Body of pancreas (tissue), 4 donors: ENCODE measurements at regions of chr11 and their contacts with region 1.

Region 1: GRCh38 chr11:126039485-126040271 is 23.0 kb downstream of the CDON start:
- DNase-seq: no peak
- ATAC-seq: no peak
- H3K4me3 ChIP-seq: no peak overlapping the region
- H3K27ac ChIP-seq: no peak overlapping the region
- H3K4me1 ChIP-seq: no peaks in the 10 kb centered on the region
- H3K27me3 ChIP-seq: no peaks in the 10 kb centered on the region
- CTCF ChIP-seq: no peak
- POLR2A ChIP-seq: no peak

Region 2: DNA sequence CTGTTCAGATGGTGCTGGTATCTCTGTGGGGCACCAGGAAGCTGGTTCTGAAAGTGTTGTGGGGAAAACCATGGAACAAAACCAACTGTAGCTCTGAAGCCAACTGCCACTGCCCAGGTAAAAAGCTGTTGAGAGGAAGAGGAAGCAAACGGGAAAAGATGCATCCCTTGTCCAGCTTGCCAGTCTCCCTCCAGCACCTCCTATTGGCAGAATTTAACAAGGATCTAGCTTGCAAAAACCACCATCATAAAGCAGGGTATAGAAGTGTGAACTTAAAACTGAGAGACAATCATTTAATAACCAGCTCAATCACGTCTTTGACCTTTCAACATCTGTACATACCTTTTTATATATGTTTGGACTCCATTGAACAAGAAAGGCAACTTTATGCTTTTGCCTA is 289.0 kb before region 1 on chr11:
- intact Hi-C with region 1: no loop called
- DNase-seq: no peak
- ATAC-seq: no peak
- H3K4me3 ChIP-seq: no peak overlapping the region
- H3K27ac ChIP-seq: no peak overlapping the region
- H3K4me1 ChIP-seq: no peaks in the 10 kb centered on the region
- H3K27me3 ChIP-seq: no peaks in the 10 kb centered on the region
- CTCF ChIP-seq: no peak
- POLR2A ChIP-seq: no peak

Region 3: DNA sequence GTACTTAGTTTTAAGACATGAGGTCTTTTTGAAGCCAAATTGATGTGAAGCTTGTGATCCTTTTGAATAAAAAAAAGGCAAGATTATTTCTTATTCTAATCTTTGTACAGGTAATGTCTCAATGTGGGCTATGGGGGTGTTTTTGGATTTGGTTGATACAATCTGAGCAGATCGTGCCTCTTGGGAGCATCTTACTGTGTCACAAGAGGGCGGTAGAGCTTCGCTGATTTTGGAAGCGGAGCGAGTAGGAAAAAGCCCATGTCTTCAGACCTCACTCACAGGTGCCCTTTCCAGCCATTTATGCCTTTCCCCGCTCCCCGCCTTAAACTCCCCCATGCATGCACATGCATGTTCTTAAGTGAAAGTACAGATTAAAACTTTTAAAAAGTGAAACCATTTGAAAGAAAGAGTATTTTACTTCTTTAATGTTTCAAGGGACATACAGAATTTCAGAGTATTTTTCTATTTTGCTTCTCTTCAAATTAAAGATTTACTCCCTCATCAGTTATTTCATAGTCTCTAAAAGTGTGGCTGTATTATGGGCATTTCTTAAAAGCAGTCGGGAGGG is 116.6 kb before region 1 on chr11:
- intact Hi-C with region 1: loop called (anchors 10 kb)
- DNase-seq: peak; percentile 66 to 77 (median 70)
- ATAC-seq: peak; percentile 74
- H3K4me3 ChIP-seq: no peak overlapping the region
- H3K27ac ChIP-seq: no peak overlapping the region
- H3K4me1 ChIP-seq: peaks cover 11% of the 10 kb centered on the region
- H3K27me3 ChIP-seq: peaks cover 0 to 7% of the 10 kb centered on the region in 2 donors
- CTCF ChIP-seq: peak; percentile 54 to 81 (median 72)
- POLR2A ChIP-seq: no peak